CD8-positive, alpha-beta T cell (primary cell): ENCODE measurements at regions of chr20 and their contacts with region 1.

Region 1: DNA sequence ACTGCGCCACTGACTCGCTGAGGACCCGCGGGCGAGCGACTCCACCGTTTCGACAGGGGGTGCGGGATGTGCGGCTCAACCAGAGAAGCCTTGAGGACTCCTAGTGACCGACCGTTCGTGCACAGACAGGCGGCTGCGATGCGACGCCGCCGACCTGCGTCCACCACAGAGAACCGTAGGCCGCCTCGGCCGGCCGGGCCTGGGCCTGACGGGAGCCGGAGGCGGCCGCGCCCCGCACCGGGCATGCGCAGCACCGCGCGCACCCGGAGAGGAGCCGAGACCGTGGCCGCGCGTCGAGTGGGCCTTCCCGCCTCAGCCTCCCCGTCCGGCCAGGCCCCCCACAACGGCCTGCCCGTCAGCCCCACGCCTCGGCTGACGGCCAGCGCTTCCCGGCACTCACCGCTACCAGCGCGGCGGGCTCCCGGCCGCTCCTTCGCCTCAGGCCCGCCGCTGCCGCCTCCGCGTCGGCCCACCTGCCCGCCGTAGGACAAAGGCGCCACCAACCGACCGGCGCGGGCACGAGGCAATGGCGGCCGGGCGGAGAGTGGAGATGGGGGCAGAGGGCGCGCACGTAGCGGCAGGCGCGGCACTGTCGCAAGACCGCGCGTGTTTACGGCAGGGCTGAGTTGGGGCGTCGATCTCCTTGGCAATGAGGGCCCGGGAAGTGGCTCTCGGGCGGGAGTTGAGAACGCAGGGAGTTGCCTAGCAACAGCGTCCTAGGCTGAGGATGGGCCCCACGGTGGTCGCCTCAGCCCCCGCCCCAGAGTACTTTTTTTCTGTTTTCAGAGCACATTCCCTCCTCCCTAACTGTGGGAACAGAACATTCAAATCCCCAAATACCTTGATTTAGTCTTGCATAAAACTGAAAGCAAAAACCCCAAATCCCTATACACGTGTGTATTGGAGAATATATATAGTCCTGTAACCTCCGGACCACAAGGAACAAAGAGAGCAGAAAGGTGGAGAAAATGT is at the start of gene NCOA5:
- DNase-seq: peak; percentile 89 to 96 (median 94)
- ATAC-seq: peak; percentile 93
- H3K4me3 ChIP-seq: peak within 1 kb of the TSS; percentile 84 to 86
- H3K4me3 Mint-ChIP-seq: peak within 1 kb of the TSS; percentile 89
- H3K27ac ChIP-seq: peak within 1 kb of the TSS; percentile 80 to 85
- H3K27ac Mint-ChIP-seq: peak within 1 kb of the TSS; percentile 87
- H3K4me1 ChIP-seq: peaks cover 43% of the 10 kb centered on the region
- H3K4me1 Mint-ChIP-seq: peaks cover 50% of the 10 kb centered on the region
- H3K27me3 ChIP-seq: no peaks in the 10 kb centered on the region
- H3K27me3 Mint-ChIP-seq: no peaks in the 10 kb centered on the region
- CTCF ChIP-seq: no peak
- total RNA-seq, gene NCOA5: 9.6 to 11.7 TPM

Region 2: GRCh38 chr20:45792332-45792686 is 297.4 kb before region 1 on chr20:
- CTCF ChIA-PET with region 1: no interaction called
- POLR2A ChIA-PET with region 1: no interaction called
- intact Hi-C with region 1: loop called (anchors 2 to 10 kb)
- DNase-seq: peak in 3 of 9 experiments; percentile 8 to 20 (median 12)
- ATAC-seq: peak; percentile 10
- H3K4me3 ChIP-seq: peak overlapping the region; percentile 82 to 100
- H3K4me3 Mint-ChIP-seq: peak overlapping the region; percentile 93
- H3K27ac ChIP-seq: peak overlapping the region; percentile 87 to 96
- H3K27ac Mint-ChIP-seq: peak overlapping the region; percentile 93
- H3K4me1 ChIP-seq: peaks cover 16% of the 10 kb centered on the region
- H3K4me1 Mint-ChIP-seq: peaks cover 19% of the 10 kb centered on the region
- H3K27me3 ChIP-seq: no peaks in the 10 kb centered on the region
- H3K27me3 Mint-ChIP-seq: no peaks in the 10 kb centered on the region
- CTCF ChIP-seq: no peak

Region 3: DNA sequence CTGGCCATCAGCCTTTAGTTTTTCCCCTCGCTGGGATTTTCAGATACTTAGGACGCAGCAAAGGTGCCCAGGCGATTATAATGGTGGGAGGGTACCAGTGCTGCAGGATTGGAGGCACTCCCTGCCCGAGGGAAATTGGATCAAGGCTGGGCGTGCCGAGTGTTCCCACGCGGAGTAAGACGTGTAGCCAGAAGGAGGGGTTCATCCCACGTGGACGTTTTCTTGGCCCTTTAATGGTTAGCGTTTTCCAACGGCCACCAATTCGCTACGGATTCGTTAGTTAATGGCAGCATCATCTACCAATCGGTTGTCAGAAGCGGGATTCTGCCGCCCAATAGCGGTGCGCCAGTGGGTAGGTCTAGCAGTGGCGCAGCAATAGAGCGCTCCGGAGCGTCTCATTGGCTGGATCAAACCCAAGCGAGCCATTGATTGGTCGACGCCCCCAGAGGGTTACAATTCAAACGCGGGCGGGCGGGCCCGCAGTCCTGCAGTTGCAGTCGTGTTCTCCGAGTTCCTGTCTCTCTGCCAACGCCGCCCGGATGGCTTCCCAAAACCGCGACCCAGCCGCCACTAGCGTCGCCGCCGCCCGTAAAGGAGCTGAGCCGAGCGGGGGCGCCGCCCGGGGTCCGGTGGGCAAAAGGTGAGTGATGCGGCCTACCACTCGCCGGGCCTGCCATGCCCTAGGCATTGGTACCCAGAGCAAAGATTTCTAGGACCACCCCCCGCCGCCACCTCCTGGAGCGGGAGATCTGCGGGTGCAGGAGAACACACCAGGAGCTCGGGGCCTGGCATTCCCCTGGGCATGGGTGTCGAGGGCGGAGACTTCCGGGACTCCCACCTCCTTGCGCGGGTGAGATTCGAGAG is 277.3 kb before region 1 on chr20 and contains the start of gene UBE2C:
- CTCF ChIA-PET with region 1: no interaction called
- POLR2A ChIA-PET with region 1: no interaction called
- intact Hi-C with region 1: loop called (anchors 5 kb)
- DNase-seq: peak; percentile 87 to 98 (median 92)
- ATAC-seq: peak; percentile 99
- H3K4me3 ChIP-seq: peak within 1 kb of the TSS; percentile 62 to 67
- H3K4me3 Mint-ChIP-seq: peak within 1 kb of the TSS; percentile 80
- H3K27ac ChIP-seq: peak within 1 kb of the TSS in 1 of 2 experiments; percentile 51
- H3K27ac Mint-ChIP-seq: peak within 1 kb of the TSS; percentile 77
- H3K4me1 ChIP-seq: peaks cover 10% of the 10 kb centered on the region
- H3K4me1 Mint-ChIP-seq: peaks cover 10% of the 10 kb centered on the region
- H3K27me3 ChIP-seq: no peaks in the 10 kb centered on the region
- H3K27me3 Mint-ChIP-seq: no peaks in the 10 kb centered on the region
- CTCF ChIP-seq: no peak
- total RNA-seq, gene UBE2C: 0.60 TPM in 1 of 2 experiments, not detected in the other

Region 4: DNA sequence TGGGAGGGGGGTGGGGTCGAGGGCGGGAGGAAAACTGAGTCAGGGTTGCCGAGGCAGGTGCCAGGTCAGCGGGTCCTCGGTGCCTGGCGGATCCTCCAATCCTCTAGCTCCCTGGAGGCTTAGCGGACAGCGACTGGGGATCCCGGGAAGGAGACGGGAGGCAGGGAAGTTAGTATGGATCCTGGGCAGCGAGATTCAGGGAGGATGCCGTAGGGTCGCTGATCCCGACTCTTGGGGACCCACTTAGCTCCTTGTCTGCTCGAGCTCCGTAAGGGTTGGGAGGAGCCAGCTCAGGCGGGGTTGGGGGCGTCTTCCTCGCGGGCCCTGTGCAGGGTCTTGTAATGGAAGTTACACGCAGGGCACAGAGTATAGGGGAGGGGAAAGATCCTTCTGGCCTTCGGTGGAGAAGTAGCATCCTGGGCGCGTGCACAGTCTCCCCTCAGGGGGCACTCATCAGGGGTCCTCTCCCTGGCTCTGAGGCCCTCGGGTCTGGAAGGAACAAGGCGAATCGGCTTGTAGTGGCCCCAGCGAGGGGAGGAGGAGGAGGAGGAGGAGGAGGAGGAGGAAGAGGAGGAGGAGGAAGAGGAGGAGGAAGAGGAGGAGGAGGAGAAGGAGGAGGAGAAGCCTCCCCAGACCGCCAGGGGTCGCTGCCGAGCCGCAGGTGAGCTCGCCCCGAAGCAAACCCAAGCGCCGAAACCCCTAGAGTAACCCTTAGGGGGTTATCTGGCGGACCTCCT is 67.1 kb before region 1 on chr20:
- CTCF ChIA-PET with region 1: interaction called, 3 read pairs
- POLR2A ChIA-PET with region 1: no interaction called
- intact Hi-C with region 1: loop called (anchors 1 to 2 kb)
- DNase-seq: peak; percentile 47 to 89 (median 79)
- ATAC-seq: peak; percentile 62
- H3K4me3 ChIP-seq: peak overlapping the region; percentile 22 to 42
- H3K4me3 Mint-ChIP-seq: peak overlapping the region; percentile 76
- H3K27ac ChIP-seq: no peak overlapping the region
- H3K27ac Mint-ChIP-seq: no peak overlapping the region
- H3K4me1 ChIP-seq: peaks cover 14% of the 10 kb centered on the region
- H3K4me1 Mint-ChIP-seq: peaks cover 20% of the 10 kb centered on the region
- H3K27me3 ChIP-seq: peaks cover 17 to 18% of the 10 kb centered on the region in 2 experiments
- H3K27me3 Mint-ChIP-seq: peaks cover 63% of the 10 kb centered on the region
- CTCF ChIP-seq: peak; percentile 58

Region 5: GRCh38 chr20:46363800-46364634 is 274.3 kb after region 1 on chr20:
- CTCF ChIA-PET with region 1: no interaction called
- POLR2A ChIA-PET with region 1: no interaction called
- intact Hi-C with region 1: loop called (anchors 1 to 2 kb)
- DNase-seq: peak; percentile 70 to 94 (median 86)
- ATAC-seq: peak; percentile 67
- H3K4me3 ChIP-seq: peak overlapping the region; percentile 89 to 92
- H3K4me3 Mint-ChIP-seq: peak overlapping the region; percentile 90
- H3K27ac ChIP-seq: peak overlapping the region; percentile 97 to 98
- H3K27ac Mint-ChIP-seq: peak overlapping the region; percentile 97
- H3K4me1 ChIP-seq: peaks cover 70% of the 10 kb centered on the region
- H3K4me1 Mint-ChIP-seq: peaks cover 83% of the 10 kb centered on the region
- H3K27me3 ChIP-seq: no peaks in the 10 kb centered on the region
- H3K27me3 Mint-ChIP-seq: no peaks in the 10 kb centered on the region
- CTCF ChIP-seq: no peak

Region 6: DNA sequence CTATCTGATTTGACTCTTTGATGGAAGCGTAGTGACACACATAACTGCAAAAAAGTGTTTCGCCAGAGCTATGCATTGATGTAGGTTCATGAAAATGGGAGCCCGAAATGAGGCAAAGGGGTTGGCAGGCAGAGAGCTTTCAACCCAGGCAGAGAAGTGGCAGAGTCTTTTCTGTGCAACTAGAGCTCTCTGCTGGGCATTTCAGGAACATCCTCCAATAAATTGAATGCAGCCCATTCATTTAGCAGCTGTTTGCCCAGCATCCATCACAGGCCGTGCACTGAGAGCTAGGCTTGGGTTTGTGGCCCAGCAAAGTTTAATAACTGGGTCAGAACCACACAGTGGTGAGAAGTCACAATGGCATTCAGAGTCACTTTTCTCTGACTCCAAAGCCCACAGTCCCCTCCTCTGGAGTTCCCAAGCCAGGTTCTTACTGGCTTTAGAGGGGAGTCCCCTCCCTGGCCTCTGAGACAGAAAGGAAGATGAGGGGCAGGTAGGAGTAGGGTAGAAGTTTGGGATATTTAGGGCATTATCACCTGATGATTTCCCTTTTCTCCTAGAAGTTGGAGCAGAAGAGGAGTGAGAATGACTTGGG is 348.6 kb after region 1 on chr20:
- CTCF ChIA-PET with region 1: no interaction called
- POLR2A ChIA-PET with region 1: no interaction called
- intact Hi-C with region 1: no loop called
- DNase-seq: peak in 3 of 9 experiments; percentile 11 to 49 (median 46)
- ATAC-seq: peak; percentile 61
- H3K4me3 ChIP-seq: no peak overlapping the region
- H3K4me3 Mint-ChIP-seq: no peak overlapping the region
- H3K27ac ChIP-seq: no peak overlapping the region
- H3K27ac Mint-ChIP-seq: no peak overlapping the region
- H3K4me1 ChIP-seq: no peaks in the 10 kb centered on the region
- H3K4me1 Mint-ChIP-seq: no peaks in the 10 kb centered on the region
- H3K27me3 ChIP-seq: no peaks in the 10 kb centered on the region
- H3K27me3 Mint-ChIP-seq: peaks cover 48% of the 10 kb centered on the region
- CTCF ChIP-seq: no peak